ENCODE measurements at regions of chr17 and their contacts with region 1.

Region 1: GRCh38 chr17:10844621-10845387 is 6.9 kb upstream of the PIRT start:
- DNase-seq: peak; percentile 44 to 94 (median 66)

Region 2: DNA sequence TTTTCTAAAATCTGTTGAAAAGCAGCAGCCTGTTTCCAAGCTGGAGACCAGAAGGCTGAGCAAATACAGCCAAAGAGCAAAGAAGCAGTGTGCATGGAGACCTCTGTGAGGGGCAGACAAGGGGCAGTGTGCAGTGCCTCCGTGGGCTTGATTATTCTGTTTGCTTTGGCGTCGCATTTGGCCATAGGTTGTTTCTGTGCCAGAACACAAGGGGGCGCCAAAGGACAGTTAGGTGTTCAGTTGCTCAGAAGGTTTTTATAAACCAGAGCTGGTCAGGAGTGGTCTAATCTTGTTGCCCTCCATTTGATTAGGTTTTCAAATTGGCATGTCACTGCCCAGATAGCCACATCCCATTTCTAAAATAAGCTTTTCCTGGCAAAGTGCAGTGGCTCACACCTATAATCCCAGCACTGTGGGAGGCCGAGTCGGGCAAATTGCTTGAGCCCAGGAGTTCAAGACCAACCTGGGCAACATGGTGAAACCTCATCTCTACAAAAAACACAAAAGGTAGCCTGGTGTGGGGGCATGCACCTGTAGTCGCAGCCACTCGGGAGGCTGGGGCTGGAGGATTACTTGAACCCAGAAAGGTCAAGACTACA is 198.3 kb before region 1 on chr17:
- intact Hi-C with region 1: loop called (anchors 5 kb)
- DNase-seq: peak; percentile 53 to 95 (median 76)

Region 3: GRCh38 chr17:10657148-10657547 is 187.7 kb before region 1 on chr17 and contains the start of gene MYH3:
- intact Hi-C with region 1: no loop called
- DNase-seq: no peak

Region 4: GRCh38 chr17:10737168-10737622 is 107.6 kb before region 1 on chr17:
- intact Hi-C with region 1: loop called (anchors 2 kb)
- DNase-seq: peak; percentile 40 to 93 (median 52)

Region 5: GRCh38 chr17:10772425-10773380 is 72.1 kb before region 1 on chr17:
- intact Hi-C with region 1: no loop called
- DNase-seq: no peak